GM12878 (cell line): ENCODE measurements at regions of chr1 and their contacts with region 1.

Region 1: GRCh38 chr1:54872036-54872331 is 15.0 kb downstream of the DHCR24 start:
- DNase-seq: no peak
- ATAC-seq: no peak
- H3K4me3 ChIP-seq: no peak overlapping the region
- H3K27ac ChIP-seq: no peak overlapping the region
- H3K4me1 ChIP-seq: no peaks in the 10 kb centered on the region
- H3K27me3 ChIP-seq: no peaks in the 10 kb centered on the region
- CTCF ChIP-seq: no peak
- EP300 ChIP-seq: no peak
- POLR2A ChIP-seq: no peak
- RAD21 ChIP-seq: no peak

Region 2: DNA sequence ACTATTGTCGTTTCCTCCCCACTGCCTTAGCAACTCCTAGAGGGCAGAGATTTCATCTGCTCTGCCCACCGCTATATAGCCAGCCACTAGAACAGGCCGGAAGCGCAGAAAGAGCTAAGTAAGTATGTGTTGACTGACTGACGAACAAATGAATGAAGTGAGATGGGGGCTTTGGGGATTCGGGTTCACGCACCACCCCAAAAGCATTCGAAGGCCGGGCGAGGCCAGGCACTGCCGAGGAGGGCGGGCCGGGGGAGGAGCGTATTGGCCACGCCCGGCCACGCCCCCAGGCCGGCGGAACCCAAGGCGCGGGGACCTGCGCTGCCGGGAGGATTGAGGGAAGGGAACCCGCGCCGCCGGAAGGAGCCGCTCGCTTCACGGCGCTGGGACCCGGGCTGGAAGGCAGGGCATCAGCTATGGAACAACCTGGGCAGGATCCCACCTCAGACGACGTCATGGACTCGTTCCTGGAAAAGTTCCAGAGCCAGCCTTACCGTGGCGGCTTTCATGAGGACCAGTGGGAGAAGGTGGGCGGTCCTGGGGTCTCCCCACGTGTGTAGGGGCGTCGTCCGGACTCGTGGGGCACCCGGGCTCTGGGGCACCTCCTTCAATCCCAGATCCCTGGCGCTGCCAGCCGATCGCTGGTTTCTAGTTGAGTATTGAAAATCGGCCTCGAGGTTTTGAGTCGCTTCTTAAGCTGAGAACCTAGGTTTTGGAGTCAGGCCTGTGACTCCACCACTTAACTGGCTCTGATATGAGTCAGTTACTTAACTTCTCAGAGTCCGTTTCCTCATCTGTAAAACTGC is 156.3 kb before region 1 on chr1 and contains the start of gene TTC4:
- CTCF ChIA-PET with region 1: no interaction called
- POLR2A ChIA-PET with region 1: no interaction called
- RAD21 ChIA-PET with region 1: no interaction called
- SMC1A ChIA-PET with region 1: no interaction called
- in situ Hi-C with region 1: no loop called
- intact Hi-C with region 1: no loop called
- DNase-seq: peak; percentile 40
- ATAC-seq: peak; percentile 98
- H3K4me3 ChIP-seq: peak within 1 kb of the TSS; percentile 77
- H3K27ac ChIP-seq: peak within 1 kb of the TSS; percentile 78
- H3K4me1 ChIP-seq: peaks cover 3% of the 10 kb centered on the region; the same call in 1 of the 2 replicates
- H3K27me3 ChIP-seq: no peaks in the 10 kb centered on the region; a peak in 1 of 4 replicates
- CTCF ChIP-seq: no peak
- EP300 ChIP-seq: peak in 1 of 2 experiments; percentile 19; a peak in 1 of 4 replicates
- POLR2A ChIP-seq: peak; percentile 97
- RAD21 ChIP-seq: no peak
- polyA plus RNA-seq, gene TTC4: 28.8 to 50.1 TPM

Region 3: GRCh38 chr1:54886724-54887664 is 15.0 kb after region 1 on chr1 and contains the start of gene DHCR24:
- CTCF ChIA-PET with region 1: interaction called, 3 read pairs
- POLR2A ChIA-PET with region 1: interaction called, 3 read pairs
- RAD21 ChIA-PET with region 1: interaction called, 3 read pairs
- SMC1A ChIA-PET with region 1: interaction called, 28 read pairs
- in situ Hi-C with region 1: no loop called
- intact Hi-C with region 1: no loop called
- DNase-seq: peak; percentile 45
- ATAC-seq: peak; percentile 95
- H3K4me3 ChIP-seq: peak within 1 kb of the TSS; percentile 81
- H3K27ac ChIP-seq: peak within 1 kb of the TSS; percentile 77
- H3K4me1 ChIP-seq: peaks cover 13% of the 10 kb centered on the region
- H3K27me3 ChIP-seq: no peaks in the 10 kb centered on the region
- CTCF ChIP-seq: no peak
- EP300 ChIP-seq: no peak
- POLR2A ChIP-seq: peak; percentile 98
- RAD21 ChIP-seq: no peak
- polyA plus RNA-seq, gene DHCR24: 23.3 to 39.3 TPM